ENCODE measurements at regions of chr14 and their contacts with region 1.

Region 1: GRCh38 chr14:64340560-64341196 is 46.5 kb upstream of the ESR2 start:
- DNase-seq: no peak

Region 2: GRCh38 chr14:64387694-64388532 is 47.2 kb after region 1 on chr14 and contains the start of gene MTHFD1:
- intact Hi-C with region 1: loop called (anchors 5 kb)
- DNase-seq: peak; percentile 92 to 99 (median 96)

Region 3: DNA sequence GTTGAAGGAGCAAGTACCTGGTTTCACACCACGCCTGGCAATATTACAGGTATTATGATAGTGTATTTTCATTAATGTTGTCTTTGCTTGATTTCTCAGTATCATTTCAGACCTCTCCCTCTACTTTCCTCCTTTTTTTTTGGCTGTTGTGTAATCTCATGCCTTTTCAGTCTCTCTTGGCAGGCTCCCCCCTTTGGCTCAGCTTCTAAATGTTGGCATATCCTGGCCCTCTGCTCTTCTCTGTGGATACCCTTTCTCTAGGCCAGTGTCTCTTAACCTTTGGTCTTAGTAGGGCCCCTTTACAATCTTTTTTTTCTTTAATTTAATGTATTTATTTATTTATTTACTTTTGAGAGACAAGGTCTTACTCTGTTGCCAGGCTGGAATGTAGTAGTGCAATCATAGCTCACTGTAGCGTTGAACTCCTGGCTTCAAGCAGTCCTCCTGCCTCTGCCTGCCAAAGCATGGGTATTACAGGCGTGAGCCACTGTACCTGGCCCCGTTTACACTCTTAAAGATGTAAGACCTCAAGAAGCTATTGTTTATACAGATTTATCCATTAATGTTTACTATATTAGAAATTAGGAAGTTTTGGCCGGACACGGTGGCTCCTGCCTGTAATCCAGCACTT is 60.3 kb after region 1 on chr14:
- intact Hi-C with region 1: no loop called
- DNase-seq: peak in 1 of 10 donors; percentile 18

Region 4: DNA sequence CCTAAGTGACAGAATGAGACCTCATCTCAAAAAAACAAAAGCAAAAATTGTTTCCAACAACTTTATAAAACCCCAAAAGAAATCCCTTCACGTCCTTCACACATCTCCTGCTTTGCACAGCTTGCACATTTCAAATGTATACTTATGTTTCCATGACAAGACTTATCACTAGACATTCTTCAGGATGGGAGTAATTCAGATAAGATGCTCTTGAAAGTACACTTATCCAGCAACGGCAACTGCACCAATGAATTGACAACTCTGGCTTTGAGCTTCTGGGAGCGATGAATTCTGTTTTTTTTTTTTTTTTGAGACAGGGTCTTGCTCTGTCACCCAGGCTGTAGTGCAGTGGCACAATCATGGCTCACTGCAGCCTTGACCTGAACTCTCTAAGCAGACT is 93.8 kb after region 1 on chr14:
- intact Hi-C with region 1: no loop called
- DNase-seq: no peak

Region 5: GRCh38 chr14:64478634-64479250 is 138.1 kb after region 1 on chr14:
- intact Hi-C with region 1: loop called (anchors 2 kb)
- DNase-seq: no peak

Region 6: DNA sequence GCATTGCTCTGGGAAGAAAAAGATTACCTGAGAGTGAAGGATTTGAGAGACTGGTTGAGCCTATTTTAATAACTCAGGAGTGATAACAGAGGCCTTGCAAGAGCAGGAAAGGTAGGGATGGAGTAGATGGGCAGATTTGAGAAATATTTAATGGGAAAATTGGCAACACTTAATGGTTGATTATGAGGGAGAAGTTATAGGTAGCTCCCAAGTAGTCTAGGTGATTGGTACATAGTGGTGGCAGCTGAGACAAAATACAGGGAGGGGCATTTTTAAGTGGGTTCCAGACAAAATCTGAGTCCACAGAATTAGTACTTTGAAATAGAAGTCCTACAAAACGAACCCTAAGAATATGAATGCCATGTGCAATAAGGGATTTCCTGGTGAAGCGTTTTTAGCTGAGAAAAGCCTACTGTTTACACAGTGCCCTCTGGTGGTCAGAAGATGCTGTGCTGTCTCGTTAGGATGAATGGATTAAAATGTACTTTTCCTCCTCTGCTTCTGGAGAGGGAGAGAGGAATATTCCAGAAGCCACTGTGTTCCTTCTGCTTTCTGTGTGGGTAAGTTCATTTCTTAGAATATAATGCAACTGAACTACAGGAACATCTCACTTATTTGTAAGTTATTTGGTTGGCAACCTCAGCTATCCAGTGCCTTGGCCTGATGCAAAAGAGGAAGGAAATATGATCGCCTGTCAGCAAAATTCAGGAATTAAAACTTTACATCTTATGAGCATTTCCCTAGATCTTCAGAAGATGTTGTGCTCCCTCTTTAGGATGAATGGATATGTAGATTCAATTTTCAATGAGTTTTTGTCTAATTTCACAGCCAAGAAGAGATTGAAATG is 170.4 kb after region 1 on chr14:
- intact Hi-C with region 1: loop called (anchors 2 kb)
- DNase-seq: peak in 6 of 10 donors; percentile 17 to 87 (median 64)

Region 7: GRCh38 chr14:64636208-64636979 is 295.7 kb after region 1 on chr14:
- intact Hi-C with region 1: loop called (anchors 10 kb)
- DNase-seq: peak; percentile 52 to 96 (median 77)

Region 8: GRCh38 chr14:65024957-65025356 is 684.3 kb after region 1 on chr14:
- intact Hi-C with region 1: no loop called
- DNase-seq: no peak

Region 9: DNA sequence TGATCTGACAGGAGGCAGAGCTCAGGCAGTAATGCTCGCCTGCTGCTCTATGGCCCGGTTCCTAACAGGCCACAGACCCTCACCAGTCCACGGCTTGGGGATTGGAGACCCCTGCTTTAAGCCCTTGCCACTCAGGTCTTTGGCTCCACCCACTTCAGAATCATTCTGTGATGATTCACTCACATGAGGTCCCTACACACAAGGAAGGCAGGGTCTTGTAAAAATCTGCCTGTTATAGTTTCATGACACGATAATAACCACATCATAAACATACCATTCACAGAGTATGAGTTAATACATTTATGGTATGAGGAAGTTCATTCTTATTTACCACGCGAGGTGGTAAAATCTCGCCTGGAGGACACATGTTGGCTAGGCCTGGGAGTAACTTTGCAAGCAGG is 790.6 kb after region 1 on chr14:
- intact Hi-C with region 1: no loop called
- DNase-seq: peak in 1 of 10 donors; percentile 5

Measured in posterior cingulate gyrus (tissue), 11 donors.